WTC11 (cell line): ENCODE measurements at regions of chr1 and their contacts with region 1.

Region 1: GRCh38 chr1:16618719-16619118 is 5.4 kb upstream of the NBPF1 start:
- DNase-seq: peak; percentile 78
- ATAC-seq: peak; percentile 29
- H3K4me3 Mint-ChIP-seq: no peak overlapping the region
- H3K27ac Mint-ChIP-seq: no peak overlapping the region
- H3K4me1 Mint-ChIP-seq: no peaks in the 10 kb centered on the region
- H3K27me3 Mint-ChIP-seq: no peaks in the 10 kb centered on the region
- CTCF ChIP-seq: no peak

Region 2: DNA sequence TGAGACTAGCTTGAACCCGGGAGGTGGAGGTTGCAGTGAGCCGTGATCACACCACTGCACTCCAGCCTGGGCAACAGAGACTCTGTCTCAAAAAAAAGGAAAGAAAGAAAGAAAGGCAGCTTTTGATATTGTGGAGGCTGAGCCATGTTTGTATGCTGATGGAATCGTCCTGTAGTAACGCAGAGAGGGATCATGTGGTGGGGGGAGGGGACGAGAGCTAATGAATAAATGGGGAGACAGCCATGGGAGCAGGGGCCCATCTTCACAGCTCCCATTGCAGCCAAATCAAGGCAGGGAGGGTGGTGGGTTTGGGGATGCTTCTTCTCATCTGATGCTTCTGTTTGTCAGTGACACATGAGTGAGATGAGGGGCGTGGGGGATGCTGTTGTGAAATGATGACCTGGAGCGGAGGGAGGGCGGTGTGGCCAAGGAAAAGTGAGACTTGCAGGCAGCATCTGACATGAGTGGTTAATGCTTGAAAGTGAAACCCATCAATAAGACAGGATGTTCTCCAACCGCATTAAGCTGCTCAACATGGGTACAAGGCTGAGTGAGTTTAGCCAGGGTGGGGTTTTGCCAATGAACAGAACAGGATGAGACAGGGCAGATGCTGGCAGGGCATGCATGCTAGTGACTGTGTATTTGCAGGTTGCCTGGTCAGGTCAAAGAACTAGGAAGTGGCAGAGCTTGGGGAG is 198.1 kb before region 1 on chr1:
- CTCF ChIA-PET with region 1: no interaction called
- POLR2A ChIA-PET with region 1: no interaction called
- DNase-seq: no peak
- ATAC-seq: no peak
- H3K4me3 Mint-ChIP-seq: no peak overlapping the region
- H3K27ac Mint-ChIP-seq: no peak overlapping the region
- H3K4me1 Mint-ChIP-seq: peaks cover 12% of the 10 kb centered on the region
- H3K27me3 Mint-ChIP-seq: no peaks in the 10 kb centered on the region; the same call in 1 of the 2 replicates
- CTCF ChIP-seq: no peak

Region 3: GRCh38 chr1:16474166-16474800 is 144.4 kb before region 1 on chr1:
- CTCF ChIA-PET with region 1: interaction called, 14 read pairs
- POLR2A ChIA-PET with region 1: no interaction called
- DNase-seq: no peak
- ATAC-seq: no peak
- H3K4me3 Mint-ChIP-seq: no peak overlapping the region
- H3K27ac Mint-ChIP-seq: no peak overlapping the region
- H3K4me1 Mint-ChIP-seq: no peaks in the 10 kb centered on the region
- H3K27me3 Mint-ChIP-seq: no peaks in the 10 kb centered on the region
- CTCF ChIP-seq: no peak

Region 4: DNA sequence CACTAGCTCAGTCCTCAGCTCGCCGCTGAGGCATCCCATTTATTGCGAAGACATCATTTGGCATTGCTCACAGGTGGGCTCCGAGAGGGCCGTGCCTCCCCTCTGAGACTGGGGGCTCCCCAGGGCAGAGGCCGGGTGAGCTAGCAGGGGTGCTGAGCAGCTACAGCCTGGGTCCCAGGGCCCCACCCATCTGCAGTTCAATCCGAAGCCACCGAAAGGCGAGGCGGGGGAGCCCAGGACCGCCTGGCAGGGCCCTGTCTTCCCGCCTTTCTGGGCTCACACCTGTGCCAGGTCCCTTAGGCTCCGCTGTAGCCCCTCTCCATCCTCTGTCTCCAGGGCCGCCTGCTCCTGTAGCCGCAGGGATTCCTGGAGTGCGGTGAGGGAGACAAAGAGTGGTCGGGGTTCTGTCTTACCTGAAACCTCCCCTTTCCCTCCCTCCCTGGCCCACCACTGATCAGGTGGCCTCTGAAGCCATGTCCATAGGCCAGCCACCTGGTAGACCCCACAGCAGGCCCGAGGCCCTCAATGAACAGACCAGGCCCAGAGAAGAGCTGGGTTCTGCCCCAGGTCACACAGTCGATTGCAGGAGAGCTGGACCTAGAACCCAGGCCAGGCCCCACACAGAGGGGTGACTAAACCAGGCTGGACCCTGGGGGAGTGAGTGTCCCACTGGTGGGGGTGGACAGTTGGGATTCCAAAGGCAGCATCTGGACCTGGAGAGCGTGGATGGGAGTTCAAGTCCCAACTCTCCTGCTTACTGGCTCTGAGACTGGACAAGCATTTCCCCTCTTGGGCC is 12.7 kb after region 1 on chr1:
- CTCF ChIA-PET with region 1: interaction called, 20 read pairs
- POLR2A ChIA-PET with region 1: interaction called, 3 read pairs
- DNase-seq: no peak
- ATAC-seq: no peak
- H3K4me3 Mint-ChIP-seq: no peak overlapping the region
- H3K27ac Mint-ChIP-seq: no peak overlapping the region
- H3K4me1 Mint-ChIP-seq: no peaks in the 10 kb centered on the region
- H3K27me3 Mint-ChIP-seq: no peaks in the 10 kb centered on the region
- CTCF ChIP-seq: no peak

Region 5: GRCh38 chr1:16717336-16718098 is 98.8 kb after region 1 on chr1:
- CTCF ChIA-PET with region 1: interaction called, 10 read pairs
- POLR2A ChIA-PET with region 1: no interaction called
- DNase-seq: peak; percentile 28
- ATAC-seq: peak; percentile 11
- H3K4me3 Mint-ChIP-seq: no peak overlapping the region
- H3K27ac Mint-ChIP-seq: no peak overlapping the region
- H3K4me1 Mint-ChIP-seq: peaks cover 16% of the 10 kb centered on the region
- H3K27me3 Mint-ChIP-seq: no peaks in the 10 kb centered on the region
- CTCF ChIP-seq: no peak

Region 6: DNA sequence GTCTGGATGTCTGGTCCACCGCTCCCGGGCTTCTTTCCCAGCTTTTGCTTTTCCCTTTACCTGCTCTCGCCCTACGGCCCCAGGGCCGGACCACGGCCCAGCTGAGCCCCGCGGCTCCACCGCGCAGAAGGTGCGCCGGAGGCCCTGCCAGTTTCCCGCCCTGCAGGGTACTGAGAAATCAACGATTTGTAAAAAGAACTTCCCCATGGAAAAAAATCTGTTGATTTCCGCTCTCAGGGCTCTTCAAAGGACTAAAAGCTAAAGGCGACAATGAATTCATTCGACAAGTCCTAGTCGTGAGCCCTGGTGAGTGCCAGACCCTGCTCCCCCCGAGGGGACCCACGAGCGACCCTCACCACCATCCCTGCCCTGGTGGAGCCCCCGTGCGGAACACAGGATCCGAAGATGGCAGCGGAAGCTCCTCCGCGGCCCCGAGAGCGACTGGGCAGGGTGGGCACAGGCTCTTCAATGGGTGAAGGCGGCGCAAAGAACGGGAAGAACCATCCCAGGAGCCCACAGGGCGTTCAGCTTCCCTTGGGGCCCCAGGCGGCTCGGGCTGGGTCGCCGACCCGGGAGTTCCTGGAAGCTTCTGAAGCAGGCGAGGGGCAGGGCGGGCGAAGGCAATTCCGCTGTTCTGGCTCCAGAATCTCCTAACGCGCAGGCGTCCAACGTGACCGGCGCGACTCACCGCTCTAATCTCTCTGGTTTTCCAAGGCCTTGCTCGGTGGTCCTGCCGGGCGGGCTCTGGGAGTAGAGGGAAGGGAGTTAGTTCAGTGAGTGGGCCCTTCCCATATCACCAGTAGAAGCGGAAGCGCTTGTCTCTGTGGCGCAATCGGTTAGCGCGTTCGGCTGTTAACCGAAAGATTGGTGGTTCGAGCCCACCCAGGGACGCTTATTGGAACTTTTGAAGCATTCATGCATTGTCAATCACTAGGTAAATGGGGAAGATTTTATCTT is 270.4 kb after region 1 on chr1:
- CTCF ChIA-PET with region 1: interaction called, 15 read pairs
- POLR2A ChIA-PET with region 1: no interaction called
- DNase-seq: peak; percentile 87
- ATAC-seq: peak; percentile 96
- H3K4me3 Mint-ChIP-seq: peak overlapping the region; percentile 85
- H3K27ac Mint-ChIP-seq: peak overlapping the region; percentile 97
- H3K4me1 Mint-ChIP-seq: peaks cover 23% of the 10 kb centered on the region
- H3K27me3 Mint-ChIP-seq: peaks cover 5% of the 10 kb centered on the region; the same call in 1 of the 2 replicates
- CTCF ChIP-seq: no peak

Region 7: GRCh38 chr1:16921391-16922185 is 302.9 kb after region 1 on chr1 and contains the start of gene CROCC:
- CTCF ChIA-PET with region 1: interaction called, 14 read pairs
- POLR2A ChIA-PET with region 1: no interaction called
- DNase-seq: peak; percentile 91
- ATAC-seq: peak; percentile 95
- H3K4me3 Mint-ChIP-seq: peak within 1 kb of the TSS; percentile 88
- H3K27ac Mint-ChIP-seq: peak within 1 kb of the TSS; percentile 97
- H3K4me1 Mint-ChIP-seq: peaks cover 35% of the 10 kb centered on the region
- H3K27me3 Mint-ChIP-seq: no peaks in the 10 kb centered on the region
- CTCF ChIP-seq: no peak
- total RNA-seq, gene CROCC: 73.8 to 75.6 TPM (median 73.9 TPM) in 3 replicates

Region 8: GRCh38 chr1:16960560-16961296 is 342.0 kb after region 1 on chr1:
- CTCF ChIA-PET with region 1: interaction called, 34 read pairs
- POLR2A ChIA-PET with region 1: no interaction called
- DNase-seq: peak; percentile 97
- ATAC-seq: peak; percentile 89
- H3K4me3 Mint-ChIP-seq: peak overlapping the region; percentile 55
- H3K27ac Mint-ChIP-seq: peak overlapping the region; percentile 3; the same call in 1 of the 2 replicates
- H3K4me1 Mint-ChIP-seq: peaks cover 4% of the 10 kb centered on the region
- H3K27me3 Mint-ChIP-seq: no peaks in the 10 kb centered on the region
- CTCF ChIP-seq: peak; percentile 33; the same call in 1 of the 2 replicates